Activated CD4-positive, alpha-beta memory T cell treated with anti-CD3 and anti-CD28 coated beads, Interleukin-2, amount 10 ng/mL, durations not matched to agents 7 days and 5 days (primary cell): ENCODE measurements at regions of chr1 and their contacts with region 1.

Region 1: GRCh38 chr1:24935615-24936484 is 5.8 kb upstream of the RUNX3 start:
- DNase-seq: no peak
- H3K4me3 Mint-ChIP-seq: no peak overlapping the region
- H3K27ac Mint-ChIP-seq: no peak overlapping the region
- H3K4me1 Mint-ChIP-seq: peaks cover 78% of the 10 kb centered on the region
- H3K27me3 Mint-ChIP-seq: no peaks in the 10 kb centered on the region

Region 2: GRCh38 chr1:24878775-24879742 is 56.8 kb before region 1 on chr1:
- CTCF ChIA-PET with region 1: no interaction called
- POLR2A ChIA-PET with region 1: no interaction called
- DNase-seq: peak; percentile 10
- H3K4me3 Mint-ChIP-seq: no peak overlapping the region
- H3K27ac Mint-ChIP-seq: no peak overlapping the region
- H3K4me1 Mint-ChIP-seq: no peaks in the 10 kb centered on the region
- H3K27me3 Mint-ChIP-seq: peaks cover 45% of the 10 kb centered on the region

Region 3: GRCh38 chr1:24946861-24947658 is 11.2 kb after region 1 on chr1:
- CTCF ChIA-PET with region 1: interaction called, 22 read pairs
- POLR2A ChIA-PET with region 1: interaction called, 105 read pairs
- DNase-seq: no peak
- H3K4me3 Mint-ChIP-seq: no peak overlapping the region
- H3K27ac Mint-ChIP-seq: no peak overlapping the region
- H3K4me1 Mint-ChIP-seq: peaks cover 77% of the 10 kb centered on the region
- H3K27me3 Mint-ChIP-seq: no peaks in the 10 kb centered on the region